Calu3 (cell line): ENCODE measurements at regions of chr6 and their contacts with region 1.

Region 1: DNA sequence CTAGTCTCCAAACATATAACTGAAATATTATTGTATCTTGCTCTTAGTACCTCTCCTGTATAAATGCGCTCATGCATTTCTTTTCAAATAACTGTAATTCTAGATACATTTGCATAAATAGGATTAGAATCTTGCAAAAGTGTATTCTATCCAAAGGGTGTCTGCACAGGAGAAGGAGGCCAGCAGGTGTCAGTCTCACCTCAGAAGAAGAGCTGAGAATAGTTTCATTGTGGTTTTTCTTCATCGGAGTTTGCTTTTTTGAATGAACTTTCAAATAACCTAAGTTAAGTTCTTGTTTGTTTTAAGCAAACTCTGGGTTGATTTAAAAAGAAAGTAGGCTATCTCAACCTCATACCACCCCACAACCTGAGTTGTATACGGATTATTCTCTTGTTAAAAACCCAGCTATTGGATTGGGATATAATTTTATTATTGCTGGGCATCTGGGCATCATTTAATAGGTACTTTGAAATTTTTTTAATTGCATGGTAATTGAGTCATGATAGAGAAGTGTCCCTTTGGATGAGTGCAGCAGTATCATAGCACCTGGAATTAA is 125.0 kb upstream of the MLIP start:
- DNase-seq: peak; percentile 61
- H3K4me3 Mint-ChIP-seq: no peak overlapping the region
- H3K27ac Mint-ChIP-seq: no peak overlapping the region
- H3K4me1 Mint-ChIP-seq: peaks cover 52% of the 10 kb centered on the region
- H3K27me3 Mint-ChIP-seq: no peaks in the 10 kb centered on the region
- CTCF ChIP-seq: peak; percentile 75

Region 2: GRCh38 chr6:54232703-54233102 is 246.5 kb after region 1 on chr6:
- CTCF ChIA-PET with region 1: no interaction called
- intact Hi-C with region 1: no loop called
- DNase-seq: no peak
- H3K4me3 Mint-ChIP-seq: no peak overlapping the region
- H3K27ac Mint-ChIP-seq: no peak overlapping the region
- H3K4me1 Mint-ChIP-seq: peaks cover 19% of the 10 kb centered on the region
- H3K27me3 Mint-ChIP-seq: no peaks in the 10 kb centered on the region
- CTCF ChIP-seq: no peak

Region 3: DNA sequence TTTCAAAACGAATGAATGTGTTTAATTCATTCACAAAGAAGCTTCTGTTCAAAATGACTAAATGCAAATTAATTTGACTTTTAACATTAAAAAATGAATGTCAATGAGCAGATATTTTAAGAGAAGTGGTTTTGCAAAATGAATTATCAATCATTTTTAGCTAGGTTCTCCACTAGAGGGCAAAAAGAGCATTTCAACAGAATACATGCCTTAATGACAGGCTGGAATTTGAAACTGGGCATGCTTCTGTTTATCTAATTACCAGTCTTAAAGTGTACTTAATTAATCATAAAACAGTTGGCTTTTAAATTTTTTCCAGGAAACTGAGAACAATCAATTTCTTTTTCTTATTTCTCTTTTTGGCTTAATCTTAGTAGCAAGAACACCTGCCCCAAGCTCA is 258.2 kb after region 1 on chr6:
- CTCF ChIA-PET with region 1: interaction called, 6 read pairs
- intact Hi-C with region 1: loop called (anchors 5 kb)
- DNase-seq: no peak
- H3K4me3 Mint-ChIP-seq: no peak overlapping the region
- H3K27ac Mint-ChIP-seq: no peak overlapping the region
- H3K4me1 Mint-ChIP-seq: no peaks in the 10 kb centered on the region
- H3K27me3 Mint-ChIP-seq: no peaks in the 10 kb centered on the region
- CTCF ChIP-seq: peak; percentile 61

Region 4: DNA sequence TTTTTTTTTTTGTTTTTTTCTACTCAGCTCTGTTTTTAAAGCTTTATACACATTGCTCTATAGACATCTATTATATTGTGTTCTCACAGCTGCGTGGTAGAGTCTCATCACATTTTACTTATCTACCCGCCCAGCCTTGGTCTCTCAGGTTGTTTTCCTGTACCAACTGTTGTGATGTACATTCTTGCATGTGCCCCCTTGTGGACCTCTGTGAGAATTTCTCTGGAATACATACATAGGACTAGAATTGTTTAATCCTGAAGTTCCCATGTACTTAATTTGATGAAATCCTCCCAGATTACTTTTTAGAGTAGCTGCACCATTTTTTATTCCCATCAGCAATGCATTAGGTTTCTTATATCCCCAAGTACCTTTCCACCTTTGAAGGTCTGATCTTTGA is 281.6 kb after region 1 on chr6:
- CTCF ChIA-PET with region 1: interaction called, 5 read pairs
- intact Hi-C with region 1: loop called (anchors 1 kb)
- DNase-seq: peak; percentile 57
- H3K4me3 Mint-ChIP-seq: no peak overlapping the region
- H3K27ac Mint-ChIP-seq: no peak overlapping the region
- H3K4me1 Mint-ChIP-seq: peaks cover 8% of the 10 kb centered on the region
- H3K27me3 Mint-ChIP-seq: no peaks in the 10 kb centered on the region
- CTCF ChIP-seq: peak; percentile 46

Region 5: DNA sequence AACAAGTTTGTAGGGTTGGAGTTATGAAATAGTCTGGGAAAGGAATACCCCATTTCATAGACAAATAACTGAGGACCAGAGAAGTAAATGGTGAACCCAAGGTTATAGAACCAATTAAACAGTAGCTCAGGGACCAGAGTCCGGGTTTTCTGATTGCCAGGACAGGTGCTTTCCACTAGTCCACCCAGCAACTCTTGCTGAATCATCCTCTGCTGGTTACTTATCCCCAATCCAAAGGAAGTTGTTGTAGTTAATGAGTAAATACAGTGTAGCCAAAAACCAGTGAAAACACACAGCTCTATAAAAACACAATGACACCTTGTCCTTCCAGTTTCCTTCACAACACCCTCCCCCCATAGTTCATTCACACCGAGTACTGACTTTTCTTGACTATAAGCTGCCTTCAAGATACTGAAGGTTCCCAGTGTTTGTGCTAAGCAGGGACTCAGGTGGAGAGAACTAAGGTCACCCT is 321.2 kb after region 1 on chr6:
- CTCF ChIA-PET with region 1: no interaction called
- intact Hi-C with region 1: loop called (anchors 2 kb)
- DNase-seq: peak; percentile 70
- H3K4me3 Mint-ChIP-seq: no peak overlapping the region
- H3K27ac Mint-ChIP-seq: no peak overlapping the region
- H3K4me1 Mint-ChIP-seq: peaks cover 17% of the 10 kb centered on the region
- H3K27me3 Mint-ChIP-seq: no peaks in the 10 kb centered on the region
- CTCF ChIP-seq: no peak

Region 6: GRCh38 chr6:54515013-54515412 is 528.8 kb after region 1 on chr6:
- CTCF ChIA-PET with region 1: no interaction called
- intact Hi-C with region 1: loop called (anchors 10 kb)
- DNase-seq: no peak
- H3K4me3 Mint-ChIP-seq: no peak overlapping the region
- H3K27ac Mint-ChIP-seq: no peak overlapping the region
- H3K4me1 Mint-ChIP-seq: no peaks in the 10 kb centered on the region
- H3K27me3 Mint-ChIP-seq: no peaks in the 10 kb centered on the region
- CTCF ChIP-seq: no peak

Region 7: GRCh38 chr6:55069132-55069781 is 1083.0 kb after region 1 on chr6:
- CTCF ChIA-PET with region 1: interaction called, 4 read pairs
- intact Hi-C with region 1: loop called (anchors 2 kb)
- DNase-seq: peak; percentile 52
- H3K4me3 Mint-ChIP-seq: no peak overlapping the region
- H3K27ac Mint-ChIP-seq: no peak overlapping the region
- H3K4me1 Mint-ChIP-seq: no peaks in the 10 kb centered on the region
- H3K27me3 Mint-ChIP-seq: no peaks in the 10 kb centered on the region
- CTCF ChIP-seq: peak; percentile 54

Region 8: DNA sequence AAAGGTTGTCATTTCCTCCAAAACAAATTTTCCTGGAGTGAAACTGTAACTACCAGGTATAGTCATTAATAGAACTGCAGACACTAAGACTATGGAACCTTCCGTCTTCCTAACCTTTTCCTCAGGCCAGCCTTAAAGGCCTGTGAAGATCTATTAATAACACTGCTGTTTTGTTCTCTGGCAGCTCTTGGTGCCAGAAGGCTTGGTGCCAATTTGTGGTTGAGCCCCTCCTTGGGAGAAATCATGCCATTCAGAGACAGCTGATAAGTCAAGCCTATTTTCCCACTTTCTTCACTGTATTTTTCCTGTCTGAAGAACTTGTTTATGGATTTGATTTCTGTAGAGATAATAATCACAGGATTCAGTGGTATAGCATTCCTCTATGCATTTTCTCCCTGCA is 1252.9 kb after region 1 on chr6:
- CTCF ChIA-PET with region 1: no interaction called
- intact Hi-C with region 1: loop called (anchors 2 kb)
- DNase-seq: peak; percentile 50
- H3K4me3 Mint-ChIP-seq: no peak overlapping the region
- H3K27ac Mint-ChIP-seq: no peak overlapping the region
- H3K4me1 Mint-ChIP-seq: peaks cover 23% of the 10 kb centered on the region
- H3K27me3 Mint-ChIP-seq: no peaks in the 10 kb centered on the region
- CTCF ChIP-seq: no peak